Vagina (tissue), 2 donors: ENCODE measurements at regions of chr3 and their contacts with region 1.

Region 1: GRCh38 chr3:129323651-129324294 is 45.1 kb downstream of the HMCES start:
- DNase-seq: no peak
- H3K4me3 ChIP-seq: no peak overlapping the region
- H3K27ac ChIP-seq: no peak overlapping the region
- H3K4me1 ChIP-seq: no peaks in the 10 kb centered on the region
- H3K27me3 ChIP-seq: no peaks in the 10 kb centered on the region
- CTCF ChIP-seq: no peak
- POLR2A ChIP-seq: no peak

Region 2: GRCh38 chr3:128285056-128285966 is 1038.5 kb before region 1 on chr3:
- intact Hi-C with region 1: loop called (anchors 5 kb)
- DNase-seq: peak; percentile 43 to 58
- H3K4me3 ChIP-seq: no peak overlapping the region
- H3K27ac ChIP-seq: no peak overlapping the region
- H3K4me1 ChIP-seq: peaks cover 12% of the 10 kb centered on the region
- H3K27me3 ChIP-seq: no peaks in the 10 kb centered on the region
- CTCF ChIP-seq: no peak
- POLR2A ChIP-seq: no peak